Naive thymus-derived CD4-positive, alpha-beta T cell (primary cell): ENCODE measurements at regions of chr6 and their contacts with region 1.

Region 1: DNA sequence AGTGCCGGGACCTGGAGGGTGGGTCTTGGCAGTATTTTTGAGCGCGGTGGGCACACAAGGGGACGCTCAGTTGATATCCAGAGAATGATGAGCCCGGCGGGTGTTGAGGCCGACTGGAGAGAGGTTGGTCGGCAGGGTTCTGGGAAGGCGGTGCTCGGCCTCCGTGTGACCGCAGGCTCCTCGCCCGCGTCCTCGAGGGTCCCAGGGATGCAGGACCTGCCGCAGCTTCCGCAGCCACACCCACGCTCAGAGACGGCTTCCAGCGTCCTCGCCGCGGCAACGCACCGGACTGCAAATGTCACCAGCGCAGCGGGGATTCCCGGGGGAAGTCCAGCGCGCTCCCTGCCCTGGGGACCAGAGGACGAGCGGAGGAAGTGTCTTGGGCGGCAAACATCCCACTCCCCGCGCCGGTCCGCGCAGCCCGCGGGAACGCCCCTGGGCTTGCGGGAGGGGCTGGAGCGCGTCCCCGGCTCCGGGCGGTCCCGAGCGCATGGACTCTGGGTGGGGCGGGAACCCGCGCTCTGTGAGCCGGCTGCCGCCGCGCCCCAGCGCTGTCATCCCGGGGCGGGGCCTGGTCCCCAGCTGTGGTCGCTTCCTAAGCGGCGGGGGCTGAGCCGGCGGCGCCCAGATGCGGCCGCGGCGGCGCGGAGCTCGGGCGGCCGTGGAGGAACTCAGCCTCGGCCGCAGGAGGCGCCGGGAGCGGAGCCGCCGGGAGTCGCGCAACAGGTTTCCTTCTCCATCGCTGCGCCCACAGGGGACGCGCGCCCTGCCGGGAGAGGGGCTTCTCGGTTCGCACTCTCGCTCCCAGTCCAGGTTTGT is at the start of gene STX11:
- DNase-seq: peak; percentile 37 to 88 (median 51)
- ATAC-seq: peak; percentile 86
- H3K4me3 ChIP-seq: peak within 1 kb of the TSS; percentile 69
- H3K4me3 Mint-ChIP-seq: peak within 1 kb of the TSS; percentile 91 to 98 (median 95)
- H3K27ac ChIP-seq: peak within 1 kb of the TSS; percentile 62
- H3K27ac Mint-ChIP-seq: peak within 1 kb of the TSS; percentile 89 to 98 (median 94)
- H3K4me1 ChIP-seq: peaks cover 0 to 17% of the 10 kb centered on the region in 2 donors
- H3K4me1 Mint-ChIP-seq: peaks cover 6 to 43% (median 15%) of the 10 kb centered on the region in 7 donors
- H3K27me3 ChIP-seq: no peaks in the 10 kb centered on the region
- H3K27me3 Mint-ChIP-seq: peaks cover 0 to 2% (median 0%) of the 10 kb centered on the region in 5 donors
- total RNA-seq, gene STX11: 2.6 to 60.5 (median 11.6) TPM

Region 2: DNA sequence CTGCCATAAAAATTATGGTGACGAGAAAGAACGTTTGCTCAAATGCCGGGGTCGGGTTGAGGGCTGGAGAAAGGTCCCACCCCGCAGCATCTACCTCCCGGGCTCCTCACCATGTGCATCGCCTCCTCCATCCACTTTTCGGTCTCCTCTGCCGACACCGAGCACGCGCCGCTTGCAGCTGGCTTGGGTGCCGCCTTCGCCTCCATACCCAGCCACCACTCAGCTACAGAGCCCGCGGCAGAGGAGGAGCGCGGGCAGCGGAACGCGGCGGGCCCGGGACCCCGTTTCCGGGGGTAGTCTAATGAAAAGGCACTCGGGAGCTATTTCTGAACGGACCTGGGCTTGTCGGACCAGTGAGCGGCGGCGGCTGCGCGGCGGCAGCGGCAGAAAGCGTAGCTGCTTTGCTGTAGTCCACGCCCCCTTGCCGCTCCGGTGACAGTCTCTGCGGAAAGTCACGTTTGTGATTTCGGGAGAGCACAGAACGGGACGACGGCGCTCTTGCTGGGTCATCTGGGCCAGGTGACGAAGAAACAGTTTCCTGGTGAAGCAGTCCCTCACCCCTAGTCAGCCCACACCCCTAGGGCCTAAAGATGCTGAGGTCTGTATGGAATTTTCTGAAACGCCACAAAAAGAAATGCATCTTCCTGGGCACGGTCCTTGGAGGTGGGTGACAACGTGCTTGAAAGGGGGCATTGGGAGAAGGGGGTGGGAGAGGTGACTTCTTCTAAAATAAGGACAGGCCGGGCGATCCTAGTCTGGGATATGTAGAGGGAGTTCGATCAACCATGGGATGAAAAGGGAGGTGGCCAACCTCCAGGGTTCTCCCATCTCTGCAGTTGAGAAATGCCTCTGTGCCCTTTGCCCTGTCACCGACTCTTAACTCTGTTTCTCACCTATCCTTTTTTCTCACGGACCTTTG is 699.4 kb before region 1 on chr6 and contains the starts of genes ADAT2 and PEX3:
- CTCF ChIA-PET with region 1: no interaction called
- POLR2A ChIA-PET with region 1: no interaction called
- intact Hi-C with region 1: loop called in 1 of 2 experiments (anchors 10 kb)
- DNase-seq: peak; percentile 87 to 95 (median 94)
- ATAC-seq: peak; percentile 98
- H3K4me3 ChIP-seq: peak within 1 kb of the TSS; percentile 89
- H3K4me3 Mint-ChIP-seq: peak within 1 kb of the TSS; percentile 84 to 100 (median 99)
- H3K27ac ChIP-seq: peak within 1 kb of the TSS; percentile 80
- H3K27ac Mint-ChIP-seq: peak within 1 kb of the TSS; percentile 93 to 99 (median 96)
- H3K4me1 ChIP-seq: peaks cover 14 to 18% of the 10 kb centered on the region in 2 donors
- H3K4me1 Mint-ChIP-seq: peaks cover 20 to 61% (median 49%) of the 10 kb centered on the region in 7 donors
- H3K27me3 ChIP-seq: no peaks in the 10 kb centered on the region
- H3K27me3 Mint-ChIP-seq: no peaks in the 10 kb centered on the region
- total RNA-seq, gene ADAT2: 18.4 to 25.8 (median 20.8) TPM
- total RNA-seq, gene PEX3: 10.9 to 28.8 (median 19.1) TPM

Region 3: DNA sequence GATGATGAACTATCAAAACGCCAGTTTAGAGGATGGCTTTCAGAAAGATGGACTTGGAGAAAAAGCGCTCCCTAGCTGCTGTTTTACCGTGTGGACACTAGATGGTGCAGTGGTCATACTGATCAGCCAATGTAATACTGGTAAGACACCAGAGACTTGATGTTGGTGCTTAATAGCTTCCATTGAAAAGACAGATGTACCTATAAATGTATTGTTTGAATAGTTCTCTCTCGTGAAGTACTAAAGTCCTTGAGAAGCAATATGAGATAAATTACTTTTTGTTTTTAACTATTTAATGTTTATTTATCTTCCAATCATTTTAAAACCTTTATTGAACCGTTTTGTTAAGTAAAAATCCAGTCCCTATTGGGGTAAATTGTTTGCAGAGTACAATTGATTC is 574.7 kb before region 1 on chr6:
- CTCF ChIA-PET with region 1: no interaction called
- POLR2A ChIA-PET with region 1: no interaction called
- intact Hi-C with region 1: loop called in 1 of 2 experiments (anchors 5 kb)
- DNase-seq: peak in 8 of 9 donors; percentile 34 to 79 (median 67)
- ATAC-seq: peak; percentile 99
- H3K4me3 ChIP-seq: no peak overlapping the region
- H3K4me3 Mint-ChIP-seq: no peak overlapping the region
- H3K27ac ChIP-seq: no peak overlapping the region
- H3K27ac Mint-ChIP-seq: peak overlapping the region in 1 of 9 donors; percentile 15
- H3K4me1 ChIP-seq: no peaks in the 10 kb centered on the region
- H3K4me1 Mint-ChIP-seq: peaks cover 0 to 9% (median 0%) of the 10 kb centered on the region in 7 donors
- H3K27me3 ChIP-seq: no peaks in the 10 kb centered on the region
- H3K27me3 Mint-ChIP-seq: no peaks in the 10 kb centered on the region

Region 4: GRCh38 chr6:144063744-144064401 is 86.2 kb before region 1 on chr6:
- CTCF ChIA-PET with region 1: no interaction called
- POLR2A ChIA-PET with region 1: interaction called, 4 read pairs
- intact Hi-C with region 1: loop called (anchors 1 to 2 kb)
- DNase-seq: peak; percentile 84 to 91 (median 88)
- ATAC-seq: peak; percentile 96
- H3K4me3 ChIP-seq: peak overlapping the region; percentile 56
- H3K4me3 Mint-ChIP-seq: peak overlapping the region; percentile 87 to 94 (median 91)
- H3K27ac ChIP-seq: peak overlapping the region; percentile 85
- H3K27ac Mint-ChIP-seq: peak overlapping the region; percentile 83 to 97 (median 88)
- H3K4me1 ChIP-seq: peaks cover 0 to 12% of the 10 kb centered on the region in 2 donors
- H3K4me1 Mint-ChIP-seq: peaks cover 17 to 44% (median 29%) of the 10 kb centered on the region in 7 donors
- H3K27me3 ChIP-seq: no peaks in the 10 kb centered on the region
- H3K27me3 Mint-ChIP-seq: peaks cover 0 to 2% (median 0%) of the 10 kb centered on the region in 5 donors

Region 5: DNA sequence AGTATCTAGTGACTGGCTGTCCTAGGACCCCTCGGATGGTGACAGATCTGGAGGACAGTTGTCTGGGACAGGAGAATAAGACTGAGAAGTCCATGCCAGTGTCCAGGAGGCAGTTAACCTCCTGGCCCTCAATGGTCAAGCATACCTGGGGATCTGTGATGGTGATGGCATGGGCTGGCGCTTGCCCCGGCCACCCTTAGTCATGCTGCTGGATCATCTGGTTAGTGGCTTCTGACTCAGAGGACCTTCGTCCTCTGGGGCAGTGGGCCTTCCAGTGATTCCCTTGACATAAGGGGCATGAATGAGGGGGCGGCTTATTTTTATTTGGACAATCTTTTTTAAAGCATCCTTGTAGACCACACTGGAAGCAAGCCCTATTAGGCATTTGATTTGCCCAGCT is 30.7 kb before region 1 on chr6:
- CTCF ChIA-PET with region 1: no interaction called
- POLR2A ChIA-PET with region 1: no interaction called
- intact Hi-C with region 1: no loop called
- DNase-seq: no peak
- ATAC-seq: no peak
- H3K4me3 ChIP-seq: no peak overlapping the region
- H3K4me3 Mint-ChIP-seq: no peak overlapping the region
- H3K27ac ChIP-seq: no peak overlapping the region
- H3K27ac Mint-ChIP-seq: no peak overlapping the region
- H3K4me1 ChIP-seq: no peaks in the 10 kb centered on the region
- H3K4me1 Mint-ChIP-seq: no peaks in the 10 kb centered on the region
- H3K27me3 ChIP-seq: no peaks in the 10 kb centered on the region
- H3K27me3 Mint-ChIP-seq: peaks cover 0 to 6% (median 0%) of the 10 kb centered on the region in 5 donors

Region 6: GRCh38 chr6:144284783-144285547 is 134.9 kb after region 1 on chr6 and contains the start of gene UTRN:
- CTCF ChIA-PET with region 1: no interaction called
- POLR2A ChIA-PET with region 1: no interaction called
- intact Hi-C with region 1: loop called in 1 of 2 experiments (anchors 2 kb)
- DNase-seq: peak; percentile 7 to 62 (median 30)
- ATAC-seq: peak; percentile 66
- H3K4me3 ChIP-seq: peak within 1 kb of the TSS; percentile 85
- H3K4me3 Mint-ChIP-seq: peak within 1 kb of the TSS; percentile 76 to 96 (median 92)
- H3K27ac ChIP-seq: no peak within 1 kb of the TSS
- H3K27ac Mint-ChIP-seq: peak within 1 kb of the TSS in 7 of 9 donors; percentile 22 to 82 (median 60)
- H3K4me1 ChIP-seq: peaks cover 10 to 14% of the 10 kb centered on the region in 2 donors
- H3K4me1 Mint-ChIP-seq: peaks cover 12 to 25% (median 15%) of the 10 kb centered on the region in 7 donors
- H3K27me3 ChIP-seq: no peaks in the 10 kb centered on the region
- H3K27me3 Mint-ChIP-seq: peaks cover 6 to 47% (median 18%) of the 10 kb centered on the region in 5 donors
- total RNA-seq, gene UTRN: 148 to 280 (median 153) TPM

Region 7: DNA sequence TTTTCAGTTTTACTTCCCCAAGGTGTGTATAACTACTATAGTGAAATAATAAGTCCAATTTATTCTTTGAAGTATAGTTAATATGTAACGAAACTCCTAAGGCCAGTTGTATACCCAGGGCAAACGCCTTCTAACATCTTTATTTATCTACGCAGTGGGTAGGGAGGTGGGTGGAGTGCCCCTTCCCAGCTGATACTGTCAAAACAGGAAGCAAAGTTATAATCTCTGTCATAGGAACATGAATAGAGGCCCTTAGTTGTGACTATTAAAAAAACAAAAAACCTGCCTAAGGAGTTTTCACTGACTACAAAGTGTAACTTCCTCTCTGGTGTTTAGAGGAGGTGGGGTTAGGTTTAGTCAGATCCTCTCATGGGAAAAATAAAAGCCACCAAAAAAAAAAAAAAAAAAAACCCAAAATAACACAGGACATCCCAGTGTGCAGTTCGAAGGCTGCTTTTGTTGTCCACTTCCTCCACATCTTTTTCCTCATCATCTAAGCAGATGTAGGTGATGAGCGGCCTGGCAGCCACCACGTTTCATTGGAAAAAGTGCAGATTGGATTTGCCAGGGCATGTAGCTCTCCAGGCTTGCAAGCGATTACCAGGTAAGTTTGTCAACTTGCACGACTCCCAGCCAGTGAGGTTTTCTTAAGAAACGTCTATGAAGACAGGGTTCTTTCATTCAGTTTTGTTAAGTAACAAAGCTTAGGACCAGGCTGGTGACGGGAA is 193.8 kb after region 1 on chr6:
- CTCF ChIA-PET with region 1: no interaction called
- POLR2A ChIA-PET with region 1: interaction called, 4 read pairs
- intact Hi-C with region 1: loop called in 1 of 2 experiments (anchors 2 kb)
- DNase-seq: peak in 8 of 9 donors; percentile 37 to 85 (median 76)
- ATAC-seq: peak; percentile 88
- H3K4me3 ChIP-seq: peak overlapping the region; percentile 67
- H3K4me3 Mint-ChIP-seq: peak overlapping the region; percentile 80 to 99 (median 94)
- H3K27ac ChIP-seq: peak overlapping the region; percentile 75
- H3K27ac Mint-ChIP-seq: peak overlapping the region; percentile 87 to 99 (median 96)
- H3K4me1 ChIP-seq: peaks cover 58 to 62% of the 10 kb centered on the region in 2 donors
- H3K4me1 Mint-ChIP-seq: peaks cover 68 to 93% (median 84%) of the 10 kb centered on the region in 7 donors
- H3K27me3 ChIP-seq: no peaks in the 10 kb centered on the region
- H3K27me3 Mint-ChIP-seq: no peaks in the 10 kb centered on the region

Region 8: DNA sequence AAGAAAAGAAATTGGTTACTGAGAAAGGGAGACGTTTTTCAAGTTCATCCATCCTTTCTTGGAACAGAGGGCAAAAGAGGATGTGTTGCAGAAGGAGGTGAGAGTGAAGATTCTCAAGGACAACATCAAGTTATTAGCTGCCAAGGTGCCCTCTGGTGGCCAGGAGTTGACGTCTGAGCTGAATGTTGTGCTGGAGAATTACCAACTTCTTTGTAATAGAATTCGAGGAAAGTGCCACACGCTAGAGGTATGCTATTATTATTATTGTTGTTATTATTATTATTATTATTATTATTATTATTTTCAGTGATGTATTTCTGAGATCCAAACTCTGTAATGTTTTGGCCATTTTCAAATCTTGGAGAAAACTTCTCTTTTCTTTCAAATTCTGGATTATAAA is 332.0 kb after region 1 on chr6:
- CTCF ChIA-PET with region 1: interaction called, 5 read pairs
- POLR2A ChIA-PET with region 1: no interaction called
- intact Hi-C with region 1: loop called in 1 of 2 experiments (anchors 2 kb)
- DNase-seq: peak; percentile 27 to 67 (median 61)
- ATAC-seq: peak; percentile 77
- H3K4me3 ChIP-seq: no peak overlapping the region
- H3K4me3 Mint-ChIP-seq: no peak overlapping the region
- H3K27ac ChIP-seq: no peak overlapping the region
- H3K27ac Mint-ChIP-seq: peak overlapping the region in 6 of 9 donors; percentile 12 to 88 (median 38)
- H3K4me1 ChIP-seq: no peaks in the 10 kb centered on the region
- H3K4me1 Mint-ChIP-seq: peaks cover 0 to 20% (median 4%) of the 10 kb centered on the region in 7 donors
- H3K27me3 ChIP-seq: no peaks in the 10 kb centered on the region
- H3K27me3 Mint-ChIP-seq: no peaks in the 10 kb centered on the region

Region 9: GRCh38 chr6:144778773-144779492 is 628.8 kb after region 1 on chr6:
- CTCF ChIA-PET with region 1: no interaction called
- POLR2A ChIA-PET with region 1: no interaction called
- intact Hi-C with region 1: no loop called
- DNase-seq: no peak
- ATAC-seq: no peak
- H3K4me3 ChIP-seq: no peak overlapping the region
- H3K4me3 Mint-ChIP-seq: no peak overlapping the region
- H3K27ac ChIP-seq: no peak overlapping the region
- H3K27ac Mint-ChIP-seq: no peak overlapping the region
- H3K4me1 ChIP-seq: no peaks in the 10 kb centered on the region
- H3K4me1 Mint-ChIP-seq: peaks cover 0 to 17% (median 4%) of the 10 kb centered on the region in 7 donors
- H3K27me3 ChIP-seq: no peaks in the 10 kb centered on the region
- H3K27me3 Mint-ChIP-seq: no peaks in the 10 kb centered on the region